ENCODE measurements at regions of chr6 and their contacts with region 1.

Region 1: GRCh38 chr6:16761471-16762267 is 409 bp upstream of the ATXN1 start:
- DNase-seq: peak; percentile 89
- H3K4me3 Mint-ChIP-seq: peak overlapping the region; percentile 98
- H3K27ac Mint-ChIP-seq: peak overlapping the region; percentile 92
- H3K4me1 Mint-ChIP-seq: peaks cover 59% of the 10 kb centered on the region
- H3K27me3 Mint-ChIP-seq: no peaks in the 10 kb centered on the region

Region 2: GRCh38 chr6:16319813-16320532 is 441.7 kb before region 1 on chr6:
- CTCF ChIA-PET with region 1: interaction called, 6 read pairs
- intact Hi-C with region 1: loop called (anchors 1 kb)
- DNase-seq: peak; percentile 86
- H3K4me3 Mint-ChIP-seq: peak overlapping the region; percentile 54
- H3K27ac Mint-ChIP-seq: peak overlapping the region; percentile 85
- H3K4me1 Mint-ChIP-seq: peaks cover 75% of the 10 kb centered on the region
- H3K27me3 Mint-ChIP-seq: no peaks in the 10 kb centered on the region

Region 3: GRCh38 chr6:16471222-16471909 is 290.3 kb before region 1 on chr6:
- CTCF ChIA-PET with region 1: interaction called, 14 read pairs
- intact Hi-C with region 1: loop called (anchors 1 kb)
- DNase-seq: no peak
- H3K4me3 Mint-ChIP-seq: no peak overlapping the region
- H3K27ac Mint-ChIP-seq: peak overlapping the region; percentile 68
- H3K4me1 Mint-ChIP-seq: peaks cover 60% of the 10 kb centered on the region
- H3K27me3 Mint-ChIP-seq: no peaks in the 10 kb centered on the region

Region 4: GRCh38 chr6:16591396-16592222 is 170.1 kb before region 1 on chr6:
- CTCF ChIA-PET with region 1: interaction called, 7 read pairs
- intact Hi-C with region 1: loop called (anchors 1 kb)
- DNase-seq: peak; percentile 46
- H3K4me3 Mint-ChIP-seq: no peak overlapping the region
- H3K27ac Mint-ChIP-seq: peak overlapping the region; percentile 48
- H3K4me1 Mint-ChIP-seq: peaks cover 18% of the 10 kb centered on the region
- H3K27me3 Mint-ChIP-seq: no peaks in the 10 kb centered on the region

Region 5: GRCh38 chr6:16698997-16699868 is 62.4 kb before region 1 on chr6:
- CTCF ChIA-PET with region 1: interaction called, 11 read pairs
- intact Hi-C with region 1: loop called (anchors 1 kb)
- DNase-seq: no peak
- H3K4me3 Mint-ChIP-seq: peak overlapping the region; percentile 65
- H3K27ac Mint-ChIP-seq: peak overlapping the region; percentile 61
- H3K4me1 Mint-ChIP-seq: peaks cover 64% of the 10 kb centered on the region
- H3K27me3 Mint-ChIP-seq: no peaks in the 10 kb centered on the region

Region 6: GRCh38 chr6:16741112-16742016 is 20.3 kb before region 1 on chr6:
- CTCF ChIA-PET with region 1: interaction called, 3 read pairs
- intact Hi-C with region 1: loop called (anchors 2 kb)
- DNase-seq: no peak
- H3K4me3 Mint-ChIP-seq: no peak overlapping the region
- H3K27ac Mint-ChIP-seq: no peak overlapping the region
- H3K4me1 Mint-ChIP-seq: peaks cover 15% of the 10 kb centered on the region
- H3K27me3 Mint-ChIP-seq: no peaks in the 10 kb centered on the region

Region 7: DNA sequence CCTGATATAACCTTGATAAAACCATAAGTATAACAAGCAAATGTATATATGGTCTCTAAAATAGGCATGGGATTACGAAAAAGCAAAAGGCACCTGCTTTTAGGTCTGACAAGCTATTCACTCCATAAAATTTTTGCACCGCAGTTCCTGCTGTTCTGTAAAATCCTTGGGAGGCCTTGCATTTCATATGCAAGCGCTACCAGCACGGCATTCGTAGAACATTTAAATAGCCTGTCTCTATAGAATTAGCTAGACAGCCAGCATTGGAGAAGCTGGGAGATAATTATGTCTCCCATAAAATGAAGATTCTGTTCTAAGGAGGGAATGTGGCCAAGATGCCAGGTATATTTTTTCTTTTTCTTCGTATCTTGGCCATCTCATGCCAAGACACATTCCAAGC is 64.1 kb after region 1 on chr6:
- CTCF ChIA-PET with region 1: no interaction called
- intact Hi-C with region 1: no loop called
- DNase-seq: no peak
- H3K4me3 Mint-ChIP-seq: no peak overlapping the region
- H3K27ac Mint-ChIP-seq: no peak overlapping the region
- H3K4me1 Mint-ChIP-seq: peaks cover 2% of the 10 kb centered on the region
- H3K27me3 Mint-ChIP-seq: peaks cover 13% of the 10 kb centered on the region

Region 8: DNA sequence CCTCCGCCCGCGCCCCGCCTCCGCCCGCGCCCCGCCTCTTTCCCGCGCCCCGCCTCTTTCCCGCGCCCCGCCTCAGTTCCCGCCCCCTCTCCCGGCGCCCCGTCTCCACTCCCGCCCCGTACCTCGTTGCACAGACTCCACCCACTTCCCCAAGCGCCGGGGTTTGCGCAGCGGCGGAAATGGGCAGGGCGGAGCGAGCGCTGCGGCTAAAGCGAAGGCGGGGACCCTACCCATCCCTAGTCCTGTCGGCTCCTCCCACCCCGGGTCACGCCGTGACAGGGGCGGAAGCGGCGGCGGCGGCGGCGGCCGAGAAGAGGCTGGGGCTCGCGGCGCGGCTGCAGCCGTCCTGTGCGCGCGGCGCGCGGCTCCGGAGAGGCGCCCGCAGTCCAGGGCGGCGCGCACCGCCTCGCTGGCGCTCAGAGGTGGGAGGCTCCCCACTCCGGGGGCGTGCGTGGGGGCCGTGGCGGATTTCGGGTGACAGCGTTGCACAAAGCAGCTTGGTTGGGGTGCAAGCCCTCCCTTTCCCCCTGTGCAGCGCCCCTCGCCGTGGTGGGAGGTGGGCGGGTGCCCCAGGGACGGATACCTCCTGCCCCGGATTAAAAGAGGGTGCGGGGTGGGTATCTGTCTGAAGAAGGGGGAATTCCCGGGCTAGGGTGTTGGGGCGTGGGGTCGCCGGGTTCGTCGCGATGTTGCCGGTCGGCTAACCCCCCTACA is 1393.6 kb after region 1 on chr6 and contains the start of gene KDM1B:
- CTCF ChIA-PET with region 1: no interaction called
- intact Hi-C with region 1: loop called (anchors 10 kb)
- DNase-seq: peak; percentile 98
- H3K4me3 Mint-ChIP-seq: peak within 1 kb of the TSS; percentile 97
- H3K27ac Mint-ChIP-seq: peak within 1 kb of the TSS; percentile 88
- H3K4me1 Mint-ChIP-seq: peaks cover 22% of the 10 kb centered on the region
- H3K27me3 Mint-ChIP-seq: no peaks in the 10 kb centered on the region
- total RNA-seq, gene KDM1B: 14.4 to 15.2 TPM

Measured in activated naive CD4-positive, alpha-beta T cell treated with anti-CD3 and anti-CD28 coated beads for 36 hours (primary cell).